Common myeloid progenitor, CD34-positive (primary cell): ENCODE measurements at regions of chr1 and their contacts with region 1.

Region 1: GRCh38 chr1:206106328-206107167 is 10.6 kb downstream of the AVPR1B start:
- DNase-seq: peak; percentile 80 to 89 (median 83)
- H3K4me3 ChIP-seq: no peak overlapping the region
- H3K27ac ChIP-seq: no peak overlapping the region
- H3K4me1 ChIP-seq: peaks cover 12 to 42% (median 27%) of the 10 kb centered on the region in 4 experiments
- H3K27me3 ChIP-seq: no peaks in the 10 kb centered on the region

Region 2: DNA sequence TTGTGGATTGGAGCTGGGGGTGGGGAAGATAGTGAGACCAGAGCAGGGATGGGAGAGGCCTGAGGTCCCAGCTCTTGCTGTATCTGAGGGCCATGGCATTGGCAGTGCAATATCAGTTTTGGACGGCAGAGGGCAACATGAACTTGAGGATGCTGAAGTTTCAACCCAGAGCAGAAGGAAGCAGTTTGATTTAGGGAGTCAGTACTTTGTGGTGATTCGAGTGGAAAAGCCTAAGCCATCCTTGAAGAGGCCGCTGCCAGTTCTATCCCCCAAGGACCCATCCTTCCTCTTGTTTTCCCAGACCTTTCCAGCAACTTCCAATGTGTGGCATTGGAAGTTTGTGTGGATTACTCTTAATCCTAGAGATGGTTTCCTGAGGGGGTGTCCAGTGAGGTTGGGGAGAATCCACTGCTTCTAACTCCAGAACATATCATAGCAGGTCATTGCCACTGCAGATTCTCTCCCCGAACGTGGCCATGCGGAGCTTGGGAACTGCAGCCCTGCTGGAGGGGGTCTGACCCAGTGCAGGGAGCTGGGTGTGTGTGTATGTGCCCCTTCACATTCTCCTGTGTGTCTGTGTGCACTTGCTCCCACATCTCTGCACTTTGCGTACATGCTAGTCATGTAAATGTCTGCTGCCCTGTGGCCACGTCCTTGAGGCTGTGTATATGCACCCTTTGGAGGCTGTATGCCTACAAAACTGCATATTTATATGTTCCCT is 187.4 kb before region 1 on chr1:
- CTCF ChIA-PET with region 1: interaction called, 11 read pairs
- POLR2A ChIA-PET with region 1: no interaction called
- DNase-seq: peak; percentile 68 to 82 (median 74)
- H3K4me3 ChIP-seq: no peak overlapping the region
- H3K27ac ChIP-seq: no peak overlapping the region
- H3K4me1 ChIP-seq: peaks cover 0 to 12% (median 6%) of the 10 kb centered on the region in 4 experiments
- H3K27me3 ChIP-seq: no peaks in the 10 kb centered on the region

Region 3: DNA sequence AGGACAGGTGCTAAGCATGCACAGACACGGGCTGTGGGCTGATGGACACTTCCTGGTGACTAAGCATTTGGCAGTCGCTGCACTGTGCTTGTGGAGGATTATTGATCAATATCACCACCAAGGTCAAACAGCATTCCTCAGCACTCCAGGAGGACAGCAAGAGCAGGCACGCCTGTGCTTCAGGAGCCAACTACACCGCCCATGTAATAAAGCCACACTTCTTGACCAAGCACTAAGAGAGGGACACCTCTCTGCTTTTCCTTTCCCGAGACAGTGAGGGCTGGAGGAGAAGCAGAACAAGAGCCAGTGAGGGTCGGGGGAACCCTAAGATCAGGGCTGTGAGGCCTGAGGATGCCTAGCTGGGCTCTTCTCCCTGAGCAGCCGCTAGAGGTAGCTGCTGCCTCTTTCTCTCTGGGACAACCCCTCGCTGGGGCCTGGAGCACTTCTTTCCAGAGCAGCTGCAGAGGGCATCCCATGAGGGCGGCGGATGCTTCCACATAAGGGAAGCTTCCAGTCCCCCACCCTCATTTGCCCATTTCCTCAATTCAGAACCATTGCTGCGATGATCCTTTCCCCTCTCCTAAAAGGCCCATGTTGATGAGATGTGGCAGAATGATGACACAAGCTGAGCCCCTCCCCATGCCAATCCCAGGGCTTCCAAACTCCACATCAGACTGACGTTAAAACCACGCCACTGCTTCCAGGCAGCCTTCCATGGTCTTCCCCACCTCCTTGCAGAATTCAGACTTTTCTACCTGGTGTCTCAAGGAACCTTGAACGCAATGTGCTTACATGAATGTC is 122.4 kb before region 1 on chr1:
- CTCF ChIA-PET with region 1: interaction called, 161 read pairs
- POLR2A ChIA-PET with region 1: no interaction called
- DNase-seq: peak; percentile 46 to 59 (median 53)
- H3K4me3 ChIP-seq: no peak overlapping the region
- H3K27ac ChIP-seq: no peak overlapping the region
- H3K4me1 ChIP-seq: peaks cover 0 to 14% (median 7%) of the 10 kb centered on the region in 4 experiments
- H3K27me3 ChIP-seq: no peaks in the 10 kb centered on the region

Region 4: DNA sequence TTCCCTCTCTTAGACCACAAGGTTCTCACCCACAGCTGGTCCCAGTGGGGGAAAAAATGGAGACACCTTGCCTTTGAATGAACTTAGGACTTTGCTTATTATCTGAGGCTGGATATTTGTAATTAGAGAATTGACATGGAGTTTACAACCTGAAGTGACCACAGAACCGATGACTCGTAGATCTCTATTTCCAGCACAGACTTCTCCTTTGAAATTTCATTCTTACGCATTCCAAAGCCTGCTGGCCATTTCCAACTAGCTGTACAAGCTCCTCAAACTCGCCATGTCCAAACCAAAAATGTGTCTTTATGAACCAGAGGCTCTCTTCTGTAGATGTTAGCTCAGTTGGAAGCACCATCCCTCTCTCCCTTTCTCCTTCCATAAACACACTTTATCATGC is 115.3 kb before region 1 on chr1:
- CTCF ChIA-PET with region 1: interaction called, 161 read pairs
- POLR2A ChIA-PET with region 1: no interaction called
- DNase-seq: no peak
- H3K4me3 ChIP-seq: no peak overlapping the region
- H3K27ac ChIP-seq: no peak overlapping the region
- H3K4me1 ChIP-seq: peaks cover 0 to 10% (median 0%) of the 10 kb centered on the region in 4 experiments
- H3K27me3 ChIP-seq: no peaks in the 10 kb centered on the region

Region 5: DNA sequence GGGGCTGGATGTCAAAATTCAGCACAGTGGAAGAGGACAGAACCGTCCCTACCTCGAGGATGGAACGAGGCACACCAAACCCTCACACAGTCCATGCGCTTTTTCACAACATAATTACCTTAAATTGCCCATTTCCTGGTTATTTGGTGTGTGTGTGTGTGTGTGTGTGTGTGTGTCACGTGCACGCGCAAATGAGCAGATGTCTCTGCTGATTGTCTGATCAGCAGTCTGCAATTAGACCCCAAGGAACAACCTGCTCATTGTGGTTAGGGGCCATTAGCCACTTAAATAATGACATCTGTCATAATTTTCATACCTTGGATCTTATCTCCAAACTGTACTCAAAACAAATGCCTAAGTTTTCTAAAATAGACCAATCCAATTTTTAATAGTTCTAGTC is 12.5 kb before region 1 on chr1:
- CTCF ChIA-PET with region 1: interaction called, 11 read pairs
- POLR2A ChIA-PET with region 1: no interaction called
- DNase-seq: peak; percentile 74 to 98 (median 95)
- H3K4me3 ChIP-seq: no peak overlapping the region
- H3K27ac ChIP-seq: peak overlapping the region; percentile 65 to 67
- H3K4me1 ChIP-seq: peaks cover 16 to 72% (median 49%) of the 10 kb centered on the region in 4 experiments
- H3K27me3 ChIP-seq: no peaks in the 10 kb centered on the region

Region 6: DNA sequence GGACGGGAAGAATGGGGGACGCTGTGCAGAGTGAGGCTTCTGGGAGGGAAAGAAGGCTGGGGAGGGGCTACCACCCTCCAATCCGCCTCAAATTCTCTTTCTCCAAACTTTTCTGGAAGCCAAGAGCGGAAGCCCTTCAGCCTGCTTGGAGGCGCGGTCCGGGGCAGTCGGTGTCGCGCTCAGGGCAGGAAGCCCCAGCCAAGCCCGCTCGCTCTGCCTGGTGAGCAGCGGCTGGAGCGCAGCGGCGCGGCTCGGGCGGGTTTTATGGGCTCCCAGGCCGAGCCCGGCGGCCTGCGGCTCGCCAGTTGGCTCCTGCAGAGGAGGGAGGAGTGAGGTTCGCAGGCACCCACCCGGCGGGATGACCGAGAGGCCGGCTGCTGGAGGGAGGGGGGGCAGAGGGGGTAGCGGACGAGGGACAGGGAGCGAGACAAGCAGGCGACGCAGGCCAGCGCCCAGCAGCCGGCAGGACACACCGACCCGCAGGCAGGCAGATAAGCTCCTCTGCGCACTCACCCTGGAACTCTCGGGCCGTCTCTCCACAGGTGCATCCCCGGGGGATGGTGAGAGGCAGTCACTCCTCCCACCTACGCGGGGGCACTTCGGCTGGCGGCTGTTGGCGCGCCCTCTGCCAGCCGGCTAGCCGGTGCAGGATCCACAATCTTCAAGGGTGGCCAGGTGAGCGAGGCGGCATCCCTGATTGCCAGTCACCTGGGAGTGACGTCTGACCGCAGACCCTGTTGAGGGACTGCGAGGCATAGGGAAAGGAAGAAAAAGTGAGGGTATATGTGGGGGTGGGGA is 10.8 kb after region 1 on chr1 and contains the start of gene AVPR1B:
- CTCF ChIA-PET with region 1: interaction called, 15 read pairs
- POLR2A ChIA-PET with region 1: no interaction called
- DNase-seq: peak in 2 of 3 donors; percentile 78 to 90
- H3K4me3 ChIP-seq: peak within 1 kb of the TSS; percentile 33 to 81 (median 59)
- H3K27ac ChIP-seq: no peak within 1 kb of the TSS
- H3K4me1 ChIP-seq: peaks cover 6 to 57% (median 39%) of the 10 kb centered on the region in 4 experiments
- H3K27me3 ChIP-seq: peaks cover 0 to 5% (median 0%) of the 10 kb centered on the region in 5 experiments

Region 7: GRCh38 chr1:206128196-206128595 is 21.6 kb after region 1 on chr1:
- CTCF ChIA-PET with region 1: no interaction called
- POLR2A ChIA-PET with region 1: no interaction called
- DNase-seq: no peak
- H3K4me3 ChIP-seq: no peak overlapping the region
- H3K27ac ChIP-seq: no peak overlapping the region
- H3K4me1 ChIP-seq: no peaks in the 10 kb centered on the region
- H3K27me3 ChIP-seq: peaks cover 0 to 2% (median 0%) of the 10 kb centered on the region in 5 experiments